Lower leg skin (tissue), 4 donors: ENCODE measurements at regions of chr2 and their contacts with region 1.

Region 1: DNA sequence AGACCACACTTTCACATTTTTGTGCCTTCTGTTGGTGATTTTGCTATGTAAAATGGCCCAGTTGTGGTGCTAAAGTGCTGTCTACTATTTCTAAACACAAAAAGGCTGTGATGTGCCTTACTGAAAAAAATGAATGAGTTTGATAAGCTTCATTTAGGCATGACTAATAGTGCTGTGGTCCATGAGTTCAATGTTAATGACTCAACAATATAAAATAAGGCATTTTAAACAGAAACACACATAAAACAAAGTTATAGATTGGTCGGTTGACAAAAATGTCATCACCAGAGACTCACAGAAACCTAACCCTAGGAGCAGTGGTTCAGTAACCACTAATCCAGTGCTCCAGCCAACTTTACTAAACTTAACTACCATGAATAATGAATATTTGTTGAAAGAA is 160.0 kb downstream of the DNAH6 start:
- DNase-seq: no peak
- H3K4me3 ChIP-seq: no peak overlapping the region
- CTCF ChIP-seq: no peak
- POLR2A ChIP-seq: no peak

Region 2: DNA sequence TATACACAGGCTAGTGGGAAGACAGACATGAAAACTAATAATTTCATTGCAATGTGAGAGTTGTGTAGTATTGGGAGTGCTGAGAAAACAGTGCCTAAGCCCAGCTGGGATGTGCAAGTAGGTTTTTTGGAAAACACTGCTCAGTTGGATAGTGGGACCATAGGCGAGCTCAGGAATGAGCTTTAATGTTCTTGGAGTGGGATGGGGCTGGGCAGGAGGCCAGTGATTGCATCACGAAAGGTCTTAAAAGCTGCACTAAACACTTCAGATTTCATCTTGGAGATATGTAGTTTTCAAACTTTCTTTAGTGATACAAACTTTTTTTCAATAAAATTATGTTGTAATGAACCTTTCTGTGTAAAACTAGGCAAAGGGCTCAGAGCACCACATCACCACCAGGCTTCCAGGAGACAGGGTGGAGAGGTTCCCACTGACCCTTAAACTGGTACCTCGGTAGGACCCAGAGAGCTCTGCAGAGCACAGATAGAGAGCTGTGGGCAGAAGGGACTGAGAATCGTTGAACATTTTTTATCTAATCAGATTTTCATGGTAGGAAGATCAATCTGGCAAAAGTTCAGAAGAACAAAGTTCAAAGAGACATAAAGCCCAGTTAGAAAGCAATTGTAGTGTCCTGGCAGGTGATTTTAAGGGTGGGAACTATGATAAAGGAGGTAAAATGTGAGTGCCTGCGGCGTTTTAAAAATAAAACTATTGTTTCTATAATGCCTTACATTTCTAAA is 28.4 kb after region 1 on chr2:
- intact Hi-C with region 1: loop called (anchors 1 kb)
- DNase-seq: no peak
- H3K4me3 ChIP-seq: no peak overlapping the region
- CTCF ChIP-seq: no peak
- POLR2A ChIP-seq: no peak